ENCODE measurements at regions of chr10 and their contacts with region 1.

Region 1: GRCh38 chr10:31928549-31929260 is at the start of gene ARHGAP12:
- DNase-seq: peak; percentile 92
- ATAC-seq: peak; percentile 80
- H3K4me3 ChIP-seq: peak within 1 kb of the TSS; percentile 77 to 96 (median 93)
- H3K4me3 Mint-ChIP-seq: peak within 1 kb of the TSS; percentile 75
- H3K27ac ChIP-seq: peak within 1 kb of the TSS; percentile 74 to 90
- H3K27ac Mint-ChIP-seq: peak within 1 kb of the TSS; percentile 90
- H3K4me1 ChIP-seq: peaks cover 20 to 31% of the 10 kb centered on the region in 2 donors
- H3K4me1 Mint-ChIP-seq: peaks cover 44% of the 10 kb centered on the region
- H3K27me3 ChIP-seq: no peaks in the 10 kb centered on the region
- H3K27me3 Mint-ChIP-seq: no peaks in the 10 kb centered on the region
- CTCF ChIP-seq: no peak
- total RNA-seq, gene ARHGAP12: 41.0 and 45.3 TPM in 2 replicates

Region 2: GRCh38 chr10:30701451-30702173 is 1227.1 kb before region 1 on chr10:
- CTCF ChIA-PET with region 1: no interaction called
- POLR2A ChIA-PET with region 1: no interaction called
- intact Hi-C with region 1: loop called (anchors 10 kb)
- DNase-seq: peak; percentile 57
- ATAC-seq: peak; percentile 52
- H3K4me3 ChIP-seq: peak overlapping the region in 4 of 5 experiments; percentile 1 to 44 (median 26)
- H3K4me3 Mint-ChIP-seq: peak overlapping the region; percentile 89
- H3K27ac ChIP-seq: peak overlapping the region; percentile 66 to 76
- H3K27ac Mint-ChIP-seq: peak overlapping the region; percentile 96
- H3K4me1 ChIP-seq: peaks cover 49% of the 10 kb centered on the region in 2 donors
- H3K4me1 Mint-ChIP-seq: peaks cover 59% of the 10 kb centered on the region
- H3K27me3 ChIP-seq: no peaks in the 10 kb centered on the region
- H3K27me3 Mint-ChIP-seq: no peaks in the 10 kb centered on the region
- CTCF ChIP-seq: no peak

Region 3: DNA sequence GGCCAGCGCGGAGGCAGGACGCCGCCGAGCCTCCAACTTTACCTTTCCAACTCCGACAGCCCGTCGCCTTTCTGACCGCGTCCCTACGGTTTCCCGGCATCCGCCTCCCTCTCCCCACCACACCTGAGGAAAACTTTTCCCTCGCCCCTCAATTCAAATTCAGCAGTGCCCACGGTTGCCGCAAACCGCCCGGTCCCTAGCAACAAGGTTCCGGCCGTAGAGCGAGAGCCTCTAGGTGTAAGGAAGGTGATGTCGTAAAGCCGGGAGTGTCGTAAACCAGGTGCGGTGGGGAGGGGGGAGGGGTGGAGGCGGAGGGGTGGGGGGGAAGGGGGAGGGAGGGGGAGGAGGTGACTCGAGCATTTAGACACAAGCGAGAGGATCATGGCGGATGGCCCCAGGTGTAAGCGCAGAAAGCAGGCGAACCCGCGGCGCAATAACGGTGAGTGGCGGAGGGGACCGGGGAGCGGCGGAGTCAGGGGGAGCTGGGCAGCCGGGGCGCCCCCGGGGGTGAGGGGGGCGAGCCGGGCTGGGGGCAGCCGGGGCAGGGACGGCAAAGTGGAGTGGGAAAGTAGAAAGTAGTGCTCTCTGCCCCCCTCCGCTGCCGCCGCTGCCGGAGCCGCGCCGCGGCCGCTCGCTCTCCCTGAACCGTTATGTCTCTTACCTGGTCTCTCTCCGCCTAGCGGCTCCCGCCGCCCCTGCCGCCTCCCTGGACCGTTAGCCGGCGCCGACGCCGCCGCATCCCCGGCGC is 609.7 kb before region 1 on chr10 and contains the start of gene ZEB1:
- CTCF ChIA-PET with region 1: no interaction called
- POLR2A ChIA-PET with region 1: no interaction called
- intact Hi-C with region 1: loop called (anchors 5 kb)
- DNase-seq: peak; percentile 95
- ATAC-seq: peak; percentile 54
- H3K4me3 ChIP-seq: peak within 1 kb of the TSS; percentile 63 to 95 (median 89)
- H3K4me3 Mint-ChIP-seq: peak within 1 kb of the TSS; percentile 96
- H3K27ac ChIP-seq: peak within 1 kb of the TSS; percentile 89 to 97
- H3K27ac Mint-ChIP-seq: peak within 1 kb of the TSS; percentile 98
- H3K4me1 ChIP-seq: peaks cover 13 to 16% of the 10 kb centered on the region in 2 donors
- H3K4me1 Mint-ChIP-seq: peaks cover 36% of the 10 kb centered on the region
- H3K27me3 ChIP-seq: no peaks in the 10 kb centered on the region
- H3K27me3 Mint-ChIP-seq: no peaks in the 10 kb centered on the region
- CTCF ChIP-seq: peak; percentile 29
- total RNA-seq, gene ZEB1: 96.7 and 107 TPM in 2 replicates

Region 4: GRCh38 chr10:31864834-31865518 is 63.7 kb before region 1 on chr10:
- CTCF ChIA-PET with region 1: interaction called, 8 read pairs
- POLR2A ChIA-PET with region 1: no interaction called
- intact Hi-C with region 1: loop called (anchors 1 kb)
- DNase-seq: no peak
- ATAC-seq: no peak
- H3K4me3 ChIP-seq: no peak overlapping the region
- H3K4me3 Mint-ChIP-seq: no peak overlapping the region
- H3K27ac ChIP-seq: no peak overlapping the region
- H3K27ac Mint-ChIP-seq: no peak overlapping the region
- H3K4me1 ChIP-seq: peaks cover 3 to 5% of the 10 kb centered on the region in 2 donors
- H3K4me1 Mint-ChIP-seq: peaks cover 24% of the 10 kb centered on the region
- H3K27me3 ChIP-seq: no peaks in the 10 kb centered on the region
- H3K27me3 Mint-ChIP-seq: no peaks in the 10 kb centered on the region
- CTCF ChIP-seq: no peak

Region 5: DNA sequence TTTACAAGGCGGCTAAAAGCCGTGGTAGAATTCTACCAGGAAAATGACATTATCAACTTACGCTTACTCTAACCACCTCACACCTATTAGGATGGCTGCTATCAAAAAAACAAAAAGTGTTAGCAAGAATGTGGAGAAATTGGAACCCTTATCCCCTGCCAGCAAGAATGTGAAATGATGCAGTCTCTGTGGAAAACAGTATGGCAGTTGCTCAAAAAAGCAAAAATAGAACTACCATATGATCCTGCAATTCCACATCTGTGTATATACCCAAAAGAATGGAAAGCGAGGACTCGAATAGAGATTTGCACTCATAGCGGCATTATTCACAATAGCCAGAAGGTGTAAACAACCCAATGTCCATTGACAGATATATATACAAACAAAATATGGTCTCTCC is 66.2 kb after region 1 on chr10:
- CTCF ChIA-PET with region 1: no interaction called
- POLR2A ChIA-PET with region 1: no interaction called
- intact Hi-C with region 1: no loop called
- DNase-seq: no peak
- ATAC-seq: no peak
- H3K4me3 ChIP-seq: no peak overlapping the region
- H3K4me3 Mint-ChIP-seq: no peak overlapping the region
- H3K27ac ChIP-seq: no peak overlapping the region
- H3K27ac Mint-ChIP-seq: no peak overlapping the region
- H3K4me1 ChIP-seq: no peaks in the 10 kb centered on the region
- H3K4me1 Mint-ChIP-seq: no peaks in the 10 kb centered on the region
- H3K27me3 ChIP-seq: no peaks in the 10 kb centered on the region
- H3K27me3 Mint-ChIP-seq: no peaks in the 10 kb centered on the region
- CTCF ChIP-seq: no peak

Region 6: DNA sequence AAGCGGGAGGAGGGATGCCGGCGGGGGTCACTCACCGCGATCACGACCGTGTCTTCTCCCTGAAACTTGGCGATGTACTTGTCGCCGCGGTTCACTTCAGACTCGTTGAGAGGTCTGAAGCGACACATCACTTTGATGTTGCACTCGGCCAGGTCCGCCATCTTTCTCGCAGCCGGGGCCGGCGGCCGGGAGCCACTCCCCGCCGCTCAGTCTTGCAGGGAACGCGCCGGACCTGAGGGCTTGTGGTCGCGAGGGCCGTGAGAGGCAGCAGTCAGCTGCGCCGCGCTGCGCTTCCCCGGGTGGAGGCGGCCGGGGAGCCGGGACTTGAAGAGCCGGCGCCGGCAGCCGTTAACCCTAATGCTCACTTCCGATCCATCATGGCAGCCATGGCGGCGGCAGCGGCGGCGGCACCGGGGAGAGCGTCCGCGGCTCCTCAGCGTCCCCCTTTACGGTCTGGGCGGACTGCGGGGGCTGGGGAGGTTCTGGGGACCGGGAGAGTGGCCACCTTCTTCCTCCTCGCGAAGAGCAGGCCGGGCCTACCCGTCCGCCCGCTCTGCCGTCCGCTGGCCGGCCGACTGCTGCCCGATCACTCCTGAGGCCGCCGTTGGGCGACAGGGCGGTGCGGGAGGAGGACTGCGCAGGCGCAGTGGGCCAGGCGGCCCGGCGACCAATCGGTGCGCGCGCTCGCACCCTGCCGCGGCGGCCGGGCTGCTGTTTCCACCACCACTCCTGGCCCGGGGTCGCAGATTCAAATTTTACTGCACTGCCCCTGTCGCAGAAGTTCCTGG is 127.3 kb after region 1 on chr10 and contains the start of gene KIF5B:
- CTCF ChIA-PET with region 1: no interaction called
- POLR2A ChIA-PET with region 1: interaction called, 6 read pairs
- intact Hi-C with region 1: loop called (anchors 1 kb)
- DNase-seq: peak; percentile 93
- ATAC-seq: peak; percentile 85
- H3K4me3 ChIP-seq: peak within 1 kb of the TSS; percentile 64 to 97 (median 85)
- H3K4me3 Mint-ChIP-seq: peak within 1 kb of the TSS; percentile 98
- H3K27ac ChIP-seq: peak within 1 kb of the TSS; percentile 80 to 90
- H3K27ac Mint-ChIP-seq: peak within 1 kb of the TSS; percentile 97
- H3K4me1 ChIP-seq: peaks cover 31 to 47% of the 10 kb centered on the region in 2 donors
- H3K4me1 Mint-ChIP-seq: peaks cover 53% of the 10 kb centered on the region
- H3K27me3 ChIP-seq: no peaks in the 10 kb centered on the region
- H3K27me3 Mint-ChIP-seq: no peaks in the 10 kb centered on the region
- CTCF ChIP-seq: no peak
- total RNA-seq, gene KIF5B: 40.1 and 44.1 TPM in 2 replicates

Region 7: DNA sequence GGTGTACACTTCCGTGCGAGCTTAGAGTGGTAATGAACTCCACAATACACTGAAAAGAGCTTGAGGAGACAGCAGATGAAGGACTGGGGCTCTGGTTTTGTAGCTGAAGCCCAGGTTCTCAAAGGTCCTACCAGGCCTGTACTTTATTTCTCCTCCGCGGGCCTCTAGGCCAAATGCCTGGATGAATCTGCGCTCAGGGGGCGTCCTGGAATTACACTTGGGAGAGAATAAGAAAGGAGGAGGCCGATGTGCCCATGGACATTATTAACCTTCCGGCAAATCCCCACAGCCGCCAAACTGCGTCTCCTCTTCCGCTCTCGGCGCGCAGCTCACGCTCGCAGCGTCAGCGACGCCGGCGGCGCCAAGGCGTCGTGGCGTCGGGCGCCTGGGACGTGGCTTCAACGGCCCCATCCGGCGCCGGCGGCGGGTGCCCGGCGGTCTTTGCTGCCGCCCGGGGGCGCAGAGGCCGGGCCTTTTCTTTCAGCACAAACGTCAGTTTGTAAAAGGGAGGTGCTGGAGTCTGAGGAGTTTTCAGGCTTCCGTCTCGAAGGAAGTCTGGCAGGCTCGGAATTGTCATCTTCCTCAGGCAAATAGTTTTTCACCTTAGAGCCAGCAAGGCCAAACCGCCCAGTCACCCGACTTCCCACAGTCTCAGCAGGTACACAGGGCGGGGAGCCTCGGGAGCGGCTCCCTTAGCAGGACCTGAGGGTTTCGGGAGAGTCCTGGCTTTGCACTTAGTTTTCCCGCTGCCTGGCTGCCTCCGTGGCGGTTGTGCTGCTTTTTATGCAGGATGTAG is 517.2 kb after region 1 on chr10 and contains the start of gene CCDC7:
- CTCF ChIA-PET with region 1: no interaction called
- POLR2A ChIA-PET with region 1: no interaction called
- intact Hi-C with region 1: loop called (anchors 2 kb)
- DNase-seq: peak; percentile 93
- ATAC-seq: peak; percentile 99
- H3K4me3 ChIP-seq: peak within 1 kb of the TSS; percentile 93 to 99 (median 98)
- H3K4me3 Mint-ChIP-seq: peak within 1 kb of the TSS; percentile 98
- H3K27ac ChIP-seq: peak within 1 kb of the TSS; percentile 95 to 99
- H3K27ac Mint-ChIP-seq: peak within 1 kb of the TSS; percentile 100
- H3K4me1 ChIP-seq: peaks cover 7 to 8% of the 10 kb centered on the region in 2 donors
- H3K4me1 Mint-ChIP-seq: peaks cover 13% of the 10 kb centered on the region
- H3K27me3 ChIP-seq: peaks cover 0 to 4% (median 0%) of the 10 kb centered on the region in 4 experiments
- H3K27me3 Mint-ChIP-seq: peaks cover 16% of the 10 kb centered on the region
- CTCF ChIP-seq: peak; percentile 65
- total RNA-seq, gene CCDC7: 23.5 and 26.6 TPM in 2 replicates